ENCODE measurements at regions of chr14 and their contacts with region 1.

Region 1: GRCh38 chr14:61019537-61019936 is 38.5 kb downstream of the SLC38A6 start:
- DNase-seq: no peak
- ATAC-seq: no peak
- H3K4me3 ChIP-seq: no peak overlapping the region
- H3K4me3 Mint-ChIP-seq: no peak overlapping the region
- H3K27ac ChIP-seq: no peak overlapping the region
- H3K27ac Mint-ChIP-seq: no peak overlapping the region
- H3K4me1 ChIP-seq: no peaks in the 10 kb centered on the region
- H3K4me1 Mint-ChIP-seq: no peaks in the 10 kb centered on the region
- H3K27me3 ChIP-seq: no peaks in the 10 kb centered on the region
- H3K27me3 Mint-ChIP-seq: no peaks in the 10 kb centered on the region
- CTCF ChIP-seq: no peak

Region 2: DNA sequence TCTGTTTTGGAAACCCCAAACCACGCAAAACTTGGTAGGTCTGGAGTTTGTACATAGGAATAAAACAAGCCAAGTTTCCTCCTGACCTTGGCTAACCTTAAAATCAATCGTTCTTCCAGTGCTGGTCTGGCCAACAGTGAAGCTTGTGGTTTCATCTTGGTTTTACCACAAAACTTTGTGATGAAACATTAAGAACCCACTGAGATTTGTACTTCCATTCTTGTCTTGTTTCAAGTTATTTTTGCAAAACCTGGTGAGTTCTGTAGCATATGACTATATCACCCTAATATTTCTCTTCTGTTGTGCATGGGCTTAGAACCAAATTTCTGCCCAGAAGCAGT is 396.6 kb before region 1 on chr14:
- CTCF ChIA-PET with region 1: interaction called, 126 read pairs
- POLR2A ChIA-PET with region 1: no interaction called
- intact Hi-C with region 1: no loop called
- DNase-seq: no peak
- ATAC-seq: no peak
- H3K4me3 ChIP-seq: no peak overlapping the region
- H3K4me3 Mint-ChIP-seq: no peak overlapping the region
- H3K27ac ChIP-seq: no peak overlapping the region
- H3K27ac Mint-ChIP-seq: no peak overlapping the region
- H3K4me1 ChIP-seq: no peaks in the 10 kb centered on the region
- H3K4me1 Mint-ChIP-seq: peaks cover 5% of the 10 kb centered on the region
- H3K27me3 ChIP-seq: peaks cover 0 to 4% (median 2%) of the 10 kb centered on the region in 4 experiments
- H3K27me3 Mint-ChIP-seq: peaks cover 28% of the 10 kb centered on the region
- CTCF ChIP-seq: no peak

Region 3: DNA sequence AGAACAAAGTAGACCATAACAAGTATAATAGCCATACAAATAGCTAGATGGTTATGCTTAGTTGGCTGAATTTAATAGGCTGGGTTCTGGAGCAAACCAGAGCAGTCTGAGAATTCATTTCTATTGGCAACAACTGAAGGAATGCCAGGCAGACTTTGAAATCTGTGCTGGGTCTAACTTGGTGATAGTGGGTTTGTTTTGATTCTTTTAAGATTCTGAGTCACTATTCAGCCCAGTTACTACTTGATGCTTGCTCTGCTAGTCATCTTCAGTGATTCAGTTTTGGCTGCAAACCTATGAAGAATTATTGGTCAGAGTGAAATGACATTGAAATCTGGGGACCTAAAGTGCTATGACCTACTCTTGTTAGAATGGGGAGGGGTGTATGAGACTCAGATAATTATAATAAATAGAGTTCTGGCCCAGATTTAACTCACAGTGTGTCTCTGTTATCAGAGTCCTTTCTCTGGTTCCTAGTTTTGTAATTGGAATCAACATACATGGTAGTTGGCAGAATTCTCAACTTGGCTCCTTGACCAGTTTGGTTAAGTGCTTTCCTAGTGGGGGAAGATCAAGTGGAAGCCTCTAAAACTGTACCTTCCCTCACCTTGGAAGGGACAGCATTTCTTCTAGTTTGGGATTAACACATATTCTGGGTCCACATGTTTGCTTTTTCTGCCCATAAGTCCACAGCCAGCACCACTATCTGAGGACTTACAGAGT is 241.5 kb before region 1 on chr14:
- CTCF ChIA-PET with region 1: no interaction called
- POLR2A ChIA-PET with region 1: no interaction called
- intact Hi-C with region 1: no loop called
- DNase-seq: no peak
- ATAC-seq: no peak
- H3K4me3 ChIP-seq: no peak overlapping the region
- H3K4me3 Mint-ChIP-seq: no peak overlapping the region
- H3K27ac ChIP-seq: no peak overlapping the region
- H3K27ac Mint-ChIP-seq: no peak overlapping the region
- H3K4me1 ChIP-seq: no peaks in the 10 kb centered on the region
- H3K4me1 Mint-ChIP-seq: no peaks in the 10 kb centered on the region
- H3K27me3 ChIP-seq: no peaks in the 10 kb centered on the region
- H3K27me3 Mint-ChIP-seq: no peaks in the 10 kb centered on the region
- CTCF ChIP-seq: no peak

Region 4: DNA sequence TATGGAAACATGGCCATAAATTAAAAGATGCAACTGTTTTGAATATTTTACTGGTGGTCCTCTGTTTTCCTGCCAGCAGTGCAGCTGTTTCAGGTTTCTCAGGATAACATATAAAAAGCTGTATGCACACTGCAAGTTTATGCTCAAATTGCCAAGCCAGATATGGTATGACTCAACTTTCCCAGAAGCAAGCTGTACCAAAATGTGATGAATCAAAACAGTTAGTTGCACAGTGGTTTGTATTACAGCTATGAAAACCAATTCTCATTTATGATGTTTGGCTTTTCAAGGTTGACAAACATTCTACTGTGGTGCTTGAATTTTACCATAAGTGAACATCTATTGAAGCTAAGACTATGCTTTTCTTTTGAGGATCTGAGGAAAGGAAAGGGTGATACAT is 54.1 kb before region 1 on chr14:
- CTCF ChIA-PET with region 1: no interaction called
- POLR2A ChIA-PET with region 1: no interaction called
- intact Hi-C with region 1: no loop called
- DNase-seq: no peak
- ATAC-seq: no peak
- H3K4me3 ChIP-seq: no peak overlapping the region
- H3K4me3 Mint-ChIP-seq: no peak overlapping the region
- H3K27ac ChIP-seq: no peak overlapping the region
- H3K27ac Mint-ChIP-seq: no peak overlapping the region
- H3K4me1 ChIP-seq: no peaks in the 10 kb centered on the region
- H3K4me1 Mint-ChIP-seq: peaks cover 3% of the 10 kb centered on the region
- H3K27me3 ChIP-seq: no peaks in the 10 kb centered on the region
- H3K27me3 Mint-ChIP-seq: no peaks in the 10 kb centered on the region
- CTCF ChIP-seq: no peak

Region 5: GRCh38 chr14:61003571-61003970 is 16.0 kb before region 1 on chr14:
- CTCF ChIA-PET with region 1: no interaction called
- POLR2A ChIA-PET with region 1: no interaction called
- intact Hi-C with region 1: no loop called
- DNase-seq: no peak
- ATAC-seq: no peak
- H3K4me3 ChIP-seq: no peak overlapping the region
- H3K4me3 Mint-ChIP-seq: no peak overlapping the region
- H3K27ac ChIP-seq: no peak overlapping the region
- H3K27ac Mint-ChIP-seq: no peak overlapping the region
- H3K4me1 ChIP-seq: no peaks in the 10 kb centered on the region
- H3K4me1 Mint-ChIP-seq: no peaks in the 10 kb centered on the region
- H3K27me3 ChIP-seq: no peaks in the 10 kb centered on the region
- H3K27me3 Mint-ChIP-seq: no peaks in the 10 kb centered on the region
- CTCF ChIP-seq: no peak

Measured in B cell (primary cell).